HAP-1 (cell line): ENCODE measurements at regions of chrX and their contacts with region 1.

Region 1: DNA sequence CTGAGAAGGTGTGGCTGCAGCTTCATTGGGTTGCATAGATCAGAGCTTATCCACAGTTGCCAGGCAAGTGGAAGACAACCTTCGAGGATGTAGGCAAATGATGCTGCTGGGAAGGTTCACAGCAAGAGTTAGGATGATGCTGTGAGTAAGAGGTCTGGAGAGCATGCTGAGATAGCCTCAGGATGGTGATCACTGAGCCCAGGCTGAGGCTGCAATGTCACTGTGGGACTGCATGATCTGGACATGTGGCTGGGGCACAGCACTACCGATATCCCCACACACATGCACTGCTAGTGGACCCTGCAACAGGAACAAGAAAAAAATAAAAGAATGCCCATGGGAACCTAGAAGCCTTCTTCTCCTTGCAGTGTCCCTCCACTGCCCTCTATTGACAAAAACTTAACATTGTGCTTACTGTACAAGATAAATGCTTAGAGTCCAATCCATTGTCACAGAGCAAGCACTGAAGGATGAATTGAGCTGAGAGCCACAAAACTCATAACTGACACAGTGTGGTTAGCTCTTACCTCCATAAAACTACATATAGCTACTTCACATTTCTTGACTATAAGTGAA is 105.6 kb downstream of the CNKSR2 start:
- DNase-seq: peak; percentile 8 to 50
- H3K4me3 ChIP-seq: no peak overlapping the region
- H3K4me1 ChIP-seq: no peaks in the 10 kb centered on the region
- H3K27me3 ChIP-seq: no peaks in the 10 kb centered on the region

Region 2: GRCh38 chrX:20530406-20530921 is 949.3 kb before region 1 on chrX:
- in situ Hi-C with region 1: loop called (anchors 25 kb)
- DNase-seq: peak; percentile 51 to 82
- H3K4me3 ChIP-seq: no peak overlapping the region
- H3K4me1 ChIP-seq: no peaks in the 10 kb centered on the region
- H3K27me3 ChIP-seq: peaks cover 10% of the 10 kb centered on the region